ENCODE measurements at regions of chr7 and their contacts with region 1.

Region 1: DNA sequence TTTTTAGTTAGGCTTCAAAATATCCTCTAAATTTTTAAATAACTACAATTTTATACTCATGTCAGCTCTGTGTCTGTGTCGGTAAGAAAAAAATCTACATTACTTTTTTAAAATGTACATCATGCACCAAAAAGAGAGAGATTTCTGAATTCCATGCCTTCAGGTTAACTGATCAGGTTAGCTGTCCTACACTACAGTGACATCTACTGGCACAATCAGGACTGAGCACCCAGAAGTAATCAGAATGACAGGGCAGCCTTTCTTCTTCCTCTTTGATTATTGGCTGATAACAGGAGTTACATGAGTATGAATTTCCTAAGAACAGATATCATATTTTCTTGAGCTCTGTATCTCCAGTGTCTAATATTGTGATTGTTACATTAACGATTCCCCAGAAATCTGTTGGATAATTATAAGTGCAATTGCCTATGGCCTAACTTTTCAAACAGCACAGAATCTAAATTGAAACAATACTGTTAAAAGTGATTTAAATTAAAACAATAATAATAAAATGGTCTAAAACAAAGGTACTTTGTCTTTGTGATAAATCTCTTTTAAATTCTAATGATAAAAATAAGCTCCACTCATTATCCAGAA is 41.8 kb upstream of the HYCC1 start:
- DNase-seq: peak in 1 of 2 donors; percentile 48
- ATAC-seq: peak in 7 of 8 donors; percentile 51 to 84 (median 64)
- H3K4me3 ChIP-seq: no peak overlapping the region
- H3K27ac ChIP-seq: no peak overlapping the region
- H3K4me1 ChIP-seq: peaks cover 0 to 9% (median 0%) of the 10 kb centered on the region in 9 donors
- H3K27me3 ChIP-seq: no peaks in the 10 kb centered on the region
- CTCF ChIP-seq: peak; percentile 81 to 97 (median 94)

Region 2: DNA sequence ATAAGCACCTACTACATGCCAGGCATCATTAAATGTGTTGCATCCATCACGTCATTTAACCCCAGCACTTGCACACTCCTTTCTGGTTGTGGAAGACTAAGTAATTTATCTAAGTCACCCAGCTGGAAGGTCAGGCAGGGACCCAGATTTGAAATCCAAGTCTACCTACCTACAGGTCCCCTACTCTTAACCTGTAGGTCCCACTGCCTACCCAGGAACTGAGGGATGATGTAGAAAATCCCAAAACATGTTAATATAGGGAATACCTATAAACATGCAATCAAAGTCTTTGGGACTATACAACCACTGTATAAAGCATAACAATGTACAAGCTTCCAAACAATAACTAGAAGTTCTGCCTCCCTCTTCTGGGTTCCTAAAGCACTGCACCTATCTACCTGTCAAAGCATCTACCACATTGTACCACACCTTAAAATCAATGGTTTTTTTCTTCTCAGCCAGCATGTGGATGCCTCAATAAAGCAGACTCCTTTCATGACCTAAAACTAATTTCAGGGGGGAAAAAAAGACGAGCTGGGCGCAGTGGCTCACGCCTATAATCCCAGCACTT is 323.0 kb before region 1 on chr7:
- intact Hi-C with region 1: loop called in 5 of 10 experiments (anchors 5 to 10 kb)
- DNase-seq: no peak
- ATAC-seq: peak in 1 of 8 donors; percentile 30
- H3K4me3 ChIP-seq: no peak overlapping the region
- H3K27ac ChIP-seq: no peak overlapping the region
- H3K4me1 ChIP-seq: peaks cover 0 to 12% (median 2%) of the 10 kb centered on the region in 9 donors
- H3K27me3 ChIP-seq: no peaks in the 10 kb centered on the region
- CTCF ChIP-seq: peak in 6 of 9 donors; percentile 6 to 46 (median 30)

Region 3: GRCh38 chr7:22841954-22842353 is 213.7 kb before region 1 on chr7:
- intact Hi-C with region 1: loop called in 1 of 10 experiments (anchors 10 kb)
- DNase-seq: no peak
- ATAC-seq: peak in 2 of 8 donors; percentile 21 to 50
- H3K4me3 ChIP-seq: no peak overlapping the region
- H3K27ac ChIP-seq: peak overlapping the region in 8 of 10 donors; percentile 4 to 74 (median 48)
- H3K4me1 ChIP-seq: peaks cover 0 to 14% (median 8%) of the 10 kb centered on the region in 9 donors
- H3K27me3 ChIP-seq: no peaks in the 10 kb centered on the region
- CTCF ChIP-seq: no peak

Region 4: GRCh38 chr7:22854158-22855048 is 201.3 kb before region 1 on chr7:
- intact Hi-C with region 1: loop called in 4 of 10 experiments (anchors 1 to 10 kb)
- DNase-seq: peak; percentile 88 to 89
- ATAC-seq: peak; percentile 84 to 97 (median 88)
- H3K4me3 ChIP-seq: peak overlapping the region; percentile 61 to 87 (median 74)
- H3K27ac ChIP-seq: peak overlapping the region; percentile 90 to 99 (median 95)
- H3K4me1 ChIP-seq: peaks cover 0 to 45% (median 36%) of the 10 kb centered on the region in 9 donors
- H3K27me3 ChIP-seq: no peaks in the 10 kb centered on the region
- CTCF ChIP-seq: peak in 8 of 9 donors; percentile 5 to 97 (median 94)

Region 5: GRCh38 chr7:22952286-22953015 is 103.2 kb before region 1 on chr7:
- intact Hi-C with region 1: no loop called
- DNase-seq: no peak
- ATAC-seq: no peak
- H3K4me3 ChIP-seq: no peak overlapping the region
- H3K27ac ChIP-seq: no peak overlapping the region
- H3K4me1 ChIP-seq: peaks cover 0 to 9% (median 5%) of the 10 kb centered on the region in 9 donors
- H3K27me3 ChIP-seq: no peaks in the 10 kb centered on the region
- CTCF ChIP-seq: no peak

Region 6: DNA sequence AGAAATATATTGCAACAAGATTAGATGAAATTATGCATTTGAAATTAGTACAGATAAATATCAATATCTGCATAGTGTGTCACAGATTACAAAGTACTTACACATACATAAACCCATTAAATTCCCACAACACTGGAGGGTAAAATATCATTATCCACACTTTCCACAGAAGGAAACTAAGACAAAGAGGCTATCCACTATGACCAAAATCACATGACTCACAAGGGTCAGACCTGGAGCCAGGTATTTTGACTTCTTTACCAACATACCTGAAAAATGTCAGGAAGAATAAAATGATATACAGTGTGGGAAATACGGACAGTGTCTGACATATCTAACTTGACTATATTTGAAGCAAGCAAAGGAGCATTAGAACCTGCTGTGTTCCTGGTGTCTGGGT is 75.8 kb before region 1 on chr7:
- intact Hi-C with region 1: loop called in 1 of 10 experiments (anchors 10 kb)
- DNase-seq: no peak
- ATAC-seq: no peak
- H3K4me3 ChIP-seq: no peak overlapping the region
- H3K27ac ChIP-seq: peak overlapping the region in 2 of 10 donors; percentile 6 to 10
- H3K4me1 ChIP-seq: peaks cover 0 to 11% (median 0%) of the 10 kb centered on the region in 9 donors
- H3K27me3 ChIP-seq: no peaks in the 10 kb centered on the region
- CTCF ChIP-seq: no peak

Region 7: GRCh38 chr7:23261843-23262452 is 206.3 kb after region 1 on chr7:
- intact Hi-C with region 1: no loop called
- DNase-seq: peak; percentile 32 to 45
- ATAC-seq: peak; percentile 65 to 82 (median 74)
- H3K4me3 ChIP-seq: no peak overlapping the region
- H3K27ac ChIP-seq: no peak overlapping the region
- H3K4me1 ChIP-seq: no peaks in the 10 kb centered on the region
- H3K27me3 ChIP-seq: peaks cover 0 to 3% (median 0%) of the 10 kb centered on the region in 7 donors
- CTCF ChIP-seq: peak; percentile 49 to 91 (median 80)

Region 8: DNA sequence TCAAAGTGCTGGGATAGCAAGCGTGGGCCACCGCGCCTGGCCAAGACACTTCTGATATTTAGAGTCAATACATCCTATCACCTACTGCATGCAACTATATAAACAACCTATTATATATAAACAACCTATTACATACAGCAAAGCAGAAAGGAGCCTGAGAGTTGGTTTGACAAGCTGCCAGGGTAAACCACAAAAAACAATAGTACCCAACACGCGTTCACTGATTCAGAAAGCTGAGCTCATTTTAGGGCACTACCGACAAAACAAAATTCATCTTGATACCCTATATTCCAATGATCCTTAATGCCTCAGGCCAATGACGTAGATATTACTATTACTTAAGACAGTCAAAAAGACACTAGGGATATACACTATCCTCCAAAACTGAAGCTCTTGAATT is 259.7 kb after region 1 on chr7:
- intact Hi-C with region 1: no loop called
- DNase-seq: no peak
- ATAC-seq: no peak
- H3K4me3 ChIP-seq: no peak overlapping the region
- H3K27ac ChIP-seq: no peak overlapping the region
- H3K4me1 ChIP-seq: peaks cover 0 to 10% (median 0%) of the 10 kb centered on the region in 9 donors
- H3K27me3 ChIP-seq: peaks cover 0 to 4% (median 0%) of the 10 kb centered on the region in 7 donors
- CTCF ChIP-seq: no peak